Activated CD4-positive, alpha-beta memory T cell treated with anti-CD3 and anti-CD28 coated beads for 36 hours (primary cell): ENCODE measurements at regions of chr7 and their contacts with region 1.

Region 1: DNA sequence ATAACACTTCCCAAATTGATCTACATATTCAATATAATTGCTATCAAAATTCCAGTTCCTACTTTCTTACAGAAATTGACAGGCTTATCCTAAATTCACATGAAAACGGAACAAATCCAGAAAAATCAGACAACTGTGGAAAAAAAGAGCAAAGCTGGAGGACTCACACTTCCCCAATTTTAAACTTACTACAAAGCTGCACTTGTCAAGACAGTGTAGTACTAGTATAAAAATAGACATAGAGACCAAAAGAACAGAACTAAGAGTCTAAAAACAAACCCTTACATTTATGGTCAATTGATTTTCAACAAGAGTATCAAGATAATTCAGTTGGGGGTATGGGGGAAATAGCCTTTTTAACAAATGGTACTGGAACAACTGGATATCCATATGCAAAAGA is 27.5 kb downstream of the LMBR1 start:
- DNase-seq: no peak
- H3K4me3 Mint-ChIP-seq: no peak overlapping the region
- H3K27ac Mint-ChIP-seq: no peak overlapping the region
- H3K4me1 Mint-ChIP-seq: peaks cover 9% of the 10 kb centered on the region
- H3K27me3 Mint-ChIP-seq: no peaks in the 10 kb centered on the region

Region 2: DNA sequence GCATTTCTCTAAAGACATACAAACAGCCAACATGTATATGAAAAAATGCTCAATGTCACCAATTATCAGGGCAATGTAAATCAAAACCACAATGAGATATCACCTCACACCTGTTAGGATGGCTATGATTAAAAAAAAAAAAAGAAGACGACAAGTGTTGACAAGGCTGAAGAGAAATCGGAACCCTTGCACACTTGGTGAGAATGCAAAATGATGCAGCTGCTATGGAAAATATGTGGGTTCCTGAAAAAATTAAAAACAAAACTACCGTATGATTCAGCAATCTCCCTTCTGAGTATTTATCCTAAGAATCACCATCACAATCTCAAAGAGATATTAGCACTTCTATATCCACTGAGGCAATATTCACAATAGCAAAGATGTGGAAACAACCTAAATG is 16.2 kb after region 1 on chr7:
- CTCF ChIA-PET with region 1: interaction called, 3 read pairs
- POLR2A ChIA-PET with region 1: no interaction called
- intact Hi-C with region 1: loop called (anchors 1 kb)
- DNase-seq: no peak
- H3K4me3 Mint-ChIP-seq: no peak overlapping the region
- H3K27ac Mint-ChIP-seq: no peak overlapping the region
- H3K4me1 Mint-ChIP-seq: peaks cover 47% of the 10 kb centered on the region
- H3K27me3 Mint-ChIP-seq: no peaks in the 10 kb centered on the region